Endothelial cell of umbilical vein (primary cell): ENCODE measurements at regions of chr1 and their contacts with region 1.

Region 1: DNA sequence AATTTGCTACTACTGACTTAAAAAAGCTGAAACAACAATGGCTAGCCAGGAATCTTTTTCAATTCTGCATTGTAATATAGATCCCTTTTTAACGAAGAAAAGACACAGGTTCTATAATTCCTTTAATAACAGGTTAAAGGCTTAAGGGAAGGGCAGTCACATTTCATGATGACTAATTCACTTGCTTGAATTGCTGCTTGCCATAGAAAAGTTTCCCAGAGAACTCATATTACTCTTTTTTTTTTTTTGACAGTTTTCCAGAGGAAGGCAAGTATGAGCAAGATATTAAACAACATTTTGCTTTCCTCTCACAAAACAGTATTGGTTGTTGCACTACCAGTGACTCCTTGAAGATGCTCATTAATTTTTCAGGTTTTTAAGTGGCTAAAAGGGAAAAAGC is 60.9 kb downstream of the IL23R start:
- DNase-seq: no peak
- H3K4me3 ChIP-seq: no peak overlapping the region
- H3K27ac ChIP-seq: no peak overlapping the region
- H3K4me1 ChIP-seq: no peaks in the 10 kb centered on the region
- H3K27me3 ChIP-seq: peaks cover 4 to 26% of the 10 kb centered on the region in 2 experiments
- CTCF ChIP-seq: no peak
- POLR2A ChIP-seq: no peak

Region 2: DNA sequence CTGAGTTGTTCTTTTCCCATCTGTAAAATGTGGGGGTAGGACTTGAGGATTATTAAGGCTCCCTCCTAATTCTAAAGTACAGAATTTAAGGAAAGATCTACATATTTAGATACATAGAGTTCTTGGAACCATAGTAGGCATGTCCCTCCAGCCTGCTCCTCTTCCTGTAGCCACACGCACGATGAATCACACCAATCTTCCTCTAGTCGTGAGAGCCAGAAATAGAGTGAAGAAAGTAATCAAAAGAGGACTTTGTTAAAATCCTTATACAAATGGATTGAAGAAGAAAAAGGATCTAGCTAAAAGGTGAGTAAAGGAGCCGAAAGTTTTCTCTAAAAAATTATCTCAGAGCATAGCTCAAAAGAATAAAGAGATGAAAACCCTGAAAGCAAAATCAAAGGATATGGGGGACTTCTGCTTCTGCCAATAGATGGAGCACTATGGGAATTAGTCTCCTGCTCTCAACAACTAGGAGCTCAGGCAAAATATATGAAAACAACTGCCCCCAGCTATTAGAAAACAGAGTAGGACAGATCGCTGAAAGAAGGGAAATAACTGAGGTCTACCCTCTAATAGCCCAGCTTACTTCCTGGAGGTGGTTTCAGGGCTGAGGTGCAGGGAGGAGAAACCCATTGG is 101.0 kb before region 1 on chr1:
- CTCF ChIA-PET with region 1: no interaction called
- POLR2A ChIA-PET with region 1: no interaction called
- dilution Hi-C with region 1: no loop called
- intact Hi-C with region 1: no loop called
- DNase-seq: peak; percentile 6
- H3K4me3 ChIP-seq: no peak overlapping the region
- H3K27ac ChIP-seq: no peak overlapping the region
- H3K4me1 ChIP-seq: no peaks in the 10 kb centered on the region
- H3K27me3 ChIP-seq: no peaks in the 10 kb centered on the region
- CTCF ChIP-seq: no peak
- POLR2A ChIP-seq: no peak

Region 3: GRCh38 chr1:67307251-67308060 is 80.3 kb after region 1 on chr1 and contains the start of gene IL12RB2:
- CTCF ChIA-PET with region 1: no interaction called
- POLR2A ChIA-PET with region 1: no interaction called
- dilution Hi-C with region 1: no loop called
- intact Hi-C with region 1: loop called (anchors 10 kb)
- DNase-seq: no peak
- H3K4me3 ChIP-seq: peak within 1 kb of the TSS; percentile 14 to 40 (median 21)
- H3K27ac ChIP-seq: no peak within 1 kb of the TSS
- H3K4me1 ChIP-seq: no peaks in the 10 kb centered on the region
- H3K27me3 ChIP-seq: peaks cover 26 to 27% of the 10 kb centered on the region in 2 experiments
- CTCF ChIP-seq: no peak
- POLR2A ChIP-seq: no peak
- total RNA-seq, gene IL12RB2: 0.42 and 0.48 TPM in 2 replicates

Region 4: DNA sequence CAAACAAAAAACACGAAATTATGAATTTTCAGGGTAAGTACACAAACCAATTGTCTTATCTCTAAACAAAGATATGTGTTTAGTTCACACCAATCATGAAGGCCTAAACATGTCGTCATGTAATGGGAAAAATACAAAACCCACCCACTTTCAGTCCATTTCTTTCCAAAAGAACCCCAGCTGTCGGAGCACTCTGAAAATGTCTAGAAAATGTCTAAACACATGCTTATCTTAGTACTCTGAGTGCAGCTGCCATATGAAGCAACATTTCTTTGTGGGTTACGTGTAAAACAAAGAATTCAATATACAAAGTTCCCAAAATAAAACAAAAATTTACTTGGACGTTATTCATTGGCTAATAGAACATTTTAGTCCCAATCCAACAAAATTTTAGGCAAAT is 180.3 kb after region 1 on chr1:
- CTCF ChIA-PET with region 1: no interaction called
- POLR2A ChIA-PET with region 1: no interaction called
- dilution Hi-C with region 1: no loop called
- intact Hi-C with region 1: loop called (anchors 5 kb)
- DNase-seq: no peak
- H3K4me3 ChIP-seq: no peak overlapping the region
- H3K27ac ChIP-seq: no peak overlapping the region
- H3K4me1 ChIP-seq: no peaks in the 10 kb centered on the region
- H3K27me3 ChIP-seq: no peaks in the 10 kb centered on the region
- CTCF ChIP-seq: no peak
- POLR2A ChIP-seq: no peak